ENCODE measurements at regions of chr14 and their contacts with region 1.

Region 1: GRCh38 chr14:70359181-70360090 is at the start of gene COX16:
- DNase-seq: peak; percentile 90
- H3K4me3 Mint-ChIP-seq: peak within 1 kb of the TSS; percentile 99
- H3K27ac Mint-ChIP-seq: peak within 1 kb of the TSS; percentile 88
- H3K4me1 Mint-ChIP-seq: peaks cover 35% of the 10 kb centered on the region
- H3K27me3 Mint-ChIP-seq: no peaks in the 10 kb centered on the region
- total RNA-seq, gene COX16: 48.4 to 54.8 TPM

Region 2: GRCh38 chr14:70289138-70289537 is 70.3 kb before region 1 on chr14:
- CTCF ChIA-PET with region 1: interaction called, 12 read pairs
- intact Hi-C with region 1: loop called (anchors 1 kb)
- DNase-seq: peak; percentile 82
- H3K4me3 Mint-ChIP-seq: peak overlapping the region; percentile 20
- H3K27ac Mint-ChIP-seq: no peak overlapping the region
- H3K4me1 Mint-ChIP-seq: no peaks in the 10 kb centered on the region
- H3K27me3 Mint-ChIP-seq: peaks cover 3% of the 10 kb centered on the region

Region 3: GRCh38 chr14:70416725-70417349 is 57.4 kb after region 1 on chr14 and contains the start of gene SYNJ2BP:
- CTCF ChIA-PET with region 1: no interaction called
- intact Hi-C with region 1: loop called (anchors 5 kb)
- DNase-seq: peak; percentile 80
- H3K4me3 Mint-ChIP-seq: peak within 1 kb of the TSS; percentile 86
- H3K27ac Mint-ChIP-seq: peak within 1 kb of the TSS; percentile 64
- H3K4me1 Mint-ChIP-seq: peaks cover 29% of the 10 kb centered on the region
- H3K27me3 Mint-ChIP-seq: no peaks in the 10 kb centered on the region
- total RNA-seq, gene SYNJ2BP: 7.3 to 8.0 TPM

Region 4: GRCh38 chr14:70600382-70601157 is 241.1 kb after region 1 on chr14 and contains the start of gene MED6:
- CTCF ChIA-PET with region 1: no interaction called
- intact Hi-C with region 1: loop called (anchors 1 kb)
- DNase-seq: peak; percentile 96
- H3K4me3 Mint-ChIP-seq: peak within 1 kb of the TSS; percentile 98
- H3K27ac Mint-ChIP-seq: peak within 1 kb of the TSS; percentile 93
- H3K4me1 Mint-ChIP-seq: peaks cover 23% of the 10 kb centered on the region
- H3K27me3 Mint-ChIP-seq: peaks cover 2% of the 10 kb centered on the region
- total RNA-seq, gene MED6: 48.5 to 48.9 TPM

Region 5: GRCh38 chr14:70770490-70770889 is 411.1 kb after region 1 on chr14:
- CTCF ChIA-PET with region 1: no interaction called
- intact Hi-C with region 1: no loop called
- DNase-seq: no peak
- H3K4me3 Mint-ChIP-seq: no peak overlapping the region
- H3K27ac Mint-ChIP-seq: no peak overlapping the region
- H3K4me1 Mint-ChIP-seq: no peaks in the 10 kb centered on the region
- H3K27me3 Mint-ChIP-seq: no peaks in the 10 kb centered on the region

Region 6: DNA sequence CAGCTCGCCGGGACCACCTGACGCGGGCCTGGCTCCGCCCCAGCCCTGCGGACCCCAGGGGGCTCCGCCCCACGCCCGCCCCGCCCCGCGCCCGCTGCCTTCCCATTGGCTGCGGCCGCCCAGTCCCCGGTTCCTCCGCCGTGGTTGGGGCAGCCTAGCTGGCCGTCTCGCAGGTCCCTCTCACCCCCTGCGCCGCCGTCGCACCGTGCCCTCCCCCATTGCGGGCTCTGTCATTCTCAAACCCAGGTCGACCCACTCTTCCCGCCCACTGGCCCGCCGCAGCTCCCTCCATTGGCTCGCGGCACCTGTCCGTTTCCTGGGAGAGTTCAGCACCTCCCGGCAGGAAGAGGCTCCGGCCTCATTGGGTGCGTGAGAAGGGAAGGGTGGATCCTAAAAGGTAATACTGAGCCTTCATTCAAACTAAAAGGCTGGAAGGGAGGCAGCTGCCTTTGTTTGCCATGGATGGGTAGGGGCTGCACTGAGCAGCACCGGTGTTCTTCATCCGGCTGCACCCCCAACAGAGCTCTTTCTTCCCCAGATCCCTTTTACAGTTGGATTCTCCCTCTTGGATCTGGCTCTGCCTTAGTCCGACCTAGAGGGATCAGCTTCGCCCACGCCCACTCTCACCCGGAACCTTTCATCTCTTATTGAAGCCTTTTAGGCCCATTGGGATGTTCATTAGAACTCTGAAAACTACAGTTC is 450.3 kb after region 1 on chr14:
- CTCF ChIA-PET with region 1: no interaction called
- intact Hi-C with region 1: loop called (anchors 2 kb)
- DNase-seq: peak; percentile 96
- H3K4me3 Mint-ChIP-seq: no peak overlapping the region
- H3K27ac Mint-ChIP-seq: peak overlapping the region; percentile 57
- H3K4me1 Mint-ChIP-seq: peaks cover 9% of the 10 kb centered on the region
- H3K27me3 Mint-ChIP-seq: no peaks in the 10 kb centered on the region